ENCODE measurements at regions of chr9 and their contacts with region 1.

Region 1: GRCh38 chr9:133184962-133185361 is 21.2 kb upstream of the GBGT1 start:
- DNase-seq: peak; percentile 70
- ATAC-seq: peak; percentile 54
- H3K4me3 Mint-ChIP-seq: no peak overlapping the region
- H3K27ac Mint-ChIP-seq: no peak overlapping the region
- H3K4me1 Mint-ChIP-seq: peaks cover 23% of the 10 kb centered on the region
- H3K27me3 Mint-ChIP-seq: peaks cover 14% of the 10 kb centered on the region

Region 2: GRCh38 chr9:132804576-132805295 is 380.2 kb before region 1 on chr9:
- CTCF ChIA-PET with region 1: no interaction called
- POLR2A ChIA-PET with region 1: no interaction called
- intact Hi-C with region 1: no loop called
- DNase-seq: no peak
- ATAC-seq: no peak
- H3K4me3 Mint-ChIP-seq: no peak overlapping the region
- H3K27ac Mint-ChIP-seq: no peak overlapping the region
- H3K4me1 Mint-ChIP-seq: no peaks in the 10 kb centered on the region
- H3K27me3 Mint-ChIP-seq: peaks cover 12% of the 10 kb centered on the region

Region 3: DNA sequence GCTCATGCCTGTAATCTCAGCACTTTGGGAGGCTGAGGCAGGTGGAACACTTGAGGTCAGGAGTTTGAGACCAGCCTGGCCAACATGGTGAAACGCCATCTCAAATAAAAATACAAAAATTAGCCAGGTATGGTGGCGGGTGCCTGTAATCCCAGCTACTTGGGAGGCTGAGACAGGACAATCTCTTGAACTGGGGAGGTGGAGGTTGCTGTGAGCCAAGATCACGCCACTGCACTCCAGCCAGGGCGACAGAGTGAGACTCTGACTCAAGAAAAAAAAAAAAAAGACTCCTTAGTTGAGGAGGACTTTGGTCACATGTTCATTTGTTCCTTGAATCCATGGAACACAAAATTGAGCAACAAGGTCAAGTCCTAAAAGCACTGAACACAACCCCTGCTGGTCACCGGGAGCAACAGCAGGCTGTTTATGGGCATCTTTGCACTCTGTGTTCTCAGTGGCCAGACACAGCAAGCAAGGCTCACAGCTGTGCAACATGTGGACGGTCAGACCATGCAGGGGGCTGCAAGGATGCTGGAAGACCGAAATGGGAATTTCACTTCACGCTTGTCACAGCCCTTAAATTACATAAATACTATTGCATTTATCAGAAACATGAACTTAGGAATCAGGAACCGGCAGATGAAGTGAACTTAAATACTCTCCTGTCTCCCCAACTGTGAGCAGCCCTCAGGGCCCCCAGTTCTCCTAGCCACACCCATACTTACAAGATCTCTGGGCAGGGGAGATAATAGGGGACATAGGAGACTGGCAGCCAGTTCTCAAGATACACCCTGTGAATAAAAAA is 24.0 kb before region 1 on chr9:
- CTCF ChIA-PET with region 1: interaction called, 17 read pairs
- POLR2A ChIA-PET with region 1: no interaction called
- intact Hi-C with region 1: no loop called
- DNase-seq: peak; percentile 67
- ATAC-seq: peak; percentile 83
- H3K4me3 Mint-ChIP-seq: no peak overlapping the region
- H3K27ac Mint-ChIP-seq: no peak overlapping the region
- H3K4me1 Mint-ChIP-seq: no peaks in the 10 kb centered on the region
- H3K27me3 Mint-ChIP-seq: no peaks in the 10 kb centered on the region

Region 4: DNA sequence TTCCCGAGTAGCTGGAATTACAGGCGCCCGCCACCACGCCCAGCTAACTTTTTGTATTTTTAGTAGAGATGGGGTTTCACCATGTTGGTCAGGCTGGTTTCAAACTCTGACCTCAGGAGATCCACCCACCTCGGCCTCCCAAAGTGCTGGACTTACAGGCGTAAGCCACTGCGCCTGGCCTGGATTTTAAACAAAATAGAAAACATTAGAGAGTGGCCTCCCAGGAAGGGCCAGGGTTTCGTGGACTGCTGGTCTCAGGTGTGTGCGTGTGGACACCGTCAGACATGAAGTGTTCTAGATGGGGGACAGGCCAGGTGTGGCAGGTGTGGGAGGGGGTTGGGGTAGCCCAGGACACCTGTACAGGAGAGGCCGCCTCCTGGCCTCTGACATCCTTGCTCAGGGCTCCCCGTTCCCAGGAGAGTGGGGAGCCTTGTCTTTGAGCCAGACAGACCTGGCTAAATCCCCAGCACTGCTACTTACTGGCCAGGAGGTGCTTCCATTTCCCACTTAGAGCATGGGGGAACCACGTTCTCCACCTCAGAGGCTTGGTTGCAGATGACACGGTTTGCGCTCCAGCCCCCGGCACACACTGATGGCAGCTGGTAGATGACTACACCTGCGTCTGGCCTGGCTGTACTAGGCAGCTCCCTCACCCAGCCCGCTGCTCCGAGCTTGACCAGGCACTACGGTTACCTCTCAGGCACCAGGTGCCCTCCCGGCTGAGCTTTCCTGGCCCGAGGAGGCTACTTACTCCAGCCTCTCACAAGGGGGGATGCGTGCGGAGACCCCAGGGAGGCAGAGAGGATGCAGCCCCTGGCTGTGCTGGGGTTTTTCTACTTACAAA is 14.0 kb before region 1 on chr9:
- CTCF ChIA-PET with region 1: interaction called, 20 read pairs
- POLR2A ChIA-PET with region 1: no interaction called
- intact Hi-C with region 1: no loop called
- DNase-seq: no peak
- ATAC-seq: no peak
- H3K4me3 Mint-ChIP-seq: no peak overlapping the region
- H3K27ac Mint-ChIP-seq: no peak overlapping the region
- H3K4me1 Mint-ChIP-seq: no peaks in the 10 kb centered on the region
- H3K27me3 Mint-ChIP-seq: no peaks in the 10 kb centered on the region

Region 5: DNA sequence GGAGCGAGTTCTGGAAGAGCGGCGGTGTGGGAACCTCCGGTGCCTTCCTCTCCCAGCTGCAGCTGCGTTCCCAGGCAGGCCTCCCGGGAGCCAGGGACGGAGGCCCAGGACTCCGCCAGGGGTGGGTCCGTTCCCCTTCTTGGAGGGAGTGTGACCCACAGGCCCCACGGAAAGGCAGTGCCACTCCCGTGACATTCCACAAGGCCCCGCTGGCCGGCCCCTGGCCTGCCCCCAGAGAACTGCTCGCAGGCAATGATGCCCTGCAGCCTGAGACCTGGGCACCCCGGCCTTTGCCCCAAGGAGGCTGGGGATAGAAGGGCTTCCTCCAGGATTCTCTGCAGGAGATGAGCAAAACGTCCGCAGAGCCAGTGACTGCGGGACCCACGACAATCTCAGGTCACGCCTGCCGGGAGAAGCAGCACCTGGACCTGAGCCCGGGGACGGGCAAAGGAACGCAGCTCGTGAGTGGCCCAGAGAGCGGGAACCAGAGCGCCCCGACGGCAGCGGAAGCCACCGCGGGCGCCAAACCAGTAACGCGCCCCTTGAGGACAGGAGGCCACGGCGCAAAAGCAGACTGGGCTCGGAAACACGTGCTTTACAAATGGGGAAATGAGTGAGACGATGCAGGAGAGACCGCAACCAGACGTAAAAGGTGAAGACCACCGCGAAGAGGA is 14.8 kb after region 1 on chr9:
- CTCF ChIA-PET with region 1: interaction called, 12 read pairs
- POLR2A ChIA-PET with region 1: no interaction called
- intact Hi-C with region 1: no loop called
- DNase-seq: peak; percentile 81
- ATAC-seq: peak; percentile 96
- H3K4me3 Mint-ChIP-seq: peak overlapping the region; percentile 76
- H3K27ac Mint-ChIP-seq: peak overlapping the region; percentile 75
- H3K4me1 Mint-ChIP-seq: peaks cover 10% of the 10 kb centered on the region
- H3K27me3 Mint-ChIP-seq: peaks cover 12% of the 10 kb centered on the region

Region 6: GRCh38 chr9:133238851-133239532 is 54.0 kb after region 1 on chr9:
- CTCF ChIA-PET with region 1: interaction called, 14 read pairs
- POLR2A ChIA-PET with region 1: no interaction called
- intact Hi-C with region 1: loop called (anchors 2 to 5 kb)
- DNase-seq: peak; percentile 88
- ATAC-seq: peak; percentile 97
- H3K4me3 Mint-ChIP-seq: peak overlapping the region; percentile 52
- H3K27ac Mint-ChIP-seq: no peak overlapping the region
- H3K4me1 Mint-ChIP-seq: peaks cover 7% of the 10 kb centered on the region
- H3K27me3 Mint-ChIP-seq: peaks cover 5% of the 10 kb centered on the region

Region 7: GRCh38 chr9:133380734-133381133 is 195.8 kb after region 1 on chr9:
- CTCF ChIA-PET with region 1: no interaction called
- POLR2A ChIA-PET with region 1: no interaction called
- intact Hi-C with region 1: no loop called
- DNase-seq: no peak
- ATAC-seq: no peak
- H3K4me3 Mint-ChIP-seq: no peak overlapping the region
- H3K27ac Mint-ChIP-seq: no peak overlapping the region
- H3K4me1 Mint-ChIP-seq: peaks cover 2% of the 10 kb centered on the region
- H3K27me3 Mint-ChIP-seq: no peaks in the 10 kb centered on the region